Activated CD8-positive, alpha-beta T cell treated with anti-CD3 and anti-CD28 coated beads, Interleukin-2, amount 10 ng/mL, durations not matched to agents 7 days and 5 days (primary cell): ENCODE measurements at regions of chr1 and their contacts with region 1.

Region 1: GRCh38 chr1:154335025-154335714 is 9.8 kb downstream of the ATP8B2 start:
- DNase-seq: peak; percentile 95
- ATAC-seq: peak; percentile 90
- H3K4me3 Mint-ChIP-seq: peak overlapping the region; percentile 47
- H3K27ac Mint-ChIP-seq: peak overlapping the region; percentile 89
- H3K4me1 Mint-ChIP-seq: peaks cover 79% of the 10 kb centered on the region
- H3K27me3 Mint-ChIP-seq: no peaks in the 10 kb centered on the region

Region 2: DNA sequence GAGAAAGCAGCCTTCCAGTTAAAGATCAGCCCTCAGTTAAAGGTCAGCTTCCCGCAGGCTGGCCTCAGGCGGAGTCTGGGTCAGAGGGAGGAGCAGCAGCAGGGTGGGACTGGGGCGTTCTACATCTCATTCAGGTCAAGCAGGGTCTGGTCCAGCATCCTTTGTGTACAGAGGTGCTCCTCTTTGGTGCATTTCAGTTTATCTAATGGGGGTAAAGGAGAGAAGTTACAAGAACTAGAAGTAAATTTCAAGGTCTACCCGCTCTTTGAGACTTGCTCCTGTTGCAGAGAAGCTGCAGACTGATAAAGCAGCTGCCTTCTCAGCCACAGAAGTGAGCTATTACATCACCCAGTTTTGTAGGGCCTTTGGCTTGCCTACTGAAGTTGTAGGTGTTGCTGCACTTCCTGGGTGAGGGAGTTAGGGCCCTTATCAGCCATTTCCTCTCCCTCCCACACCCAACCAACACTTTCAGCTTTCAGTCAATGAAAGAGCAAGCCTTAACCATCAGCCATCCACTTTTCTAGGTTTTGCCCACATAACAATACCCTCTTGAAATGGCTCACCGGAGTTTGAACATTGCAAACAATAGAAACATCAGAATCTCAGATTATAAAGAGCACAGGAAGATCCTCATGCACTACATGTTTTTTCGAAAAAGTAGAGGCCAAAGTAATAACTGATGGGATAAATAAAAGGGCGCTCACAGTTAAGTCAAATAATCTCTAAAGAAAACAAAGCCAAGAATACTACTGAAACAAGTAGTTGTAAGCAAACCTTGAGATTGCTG is 177.5 kb before region 1 on chr1:
- CTCF ChIA-PET with region 1: interaction called, 10 read pairs
- POLR2A ChIA-PET with region 1: no interaction called
- DNase-seq: peak; percentile 89
- ATAC-seq: peak; percentile 98
- H3K4me3 Mint-ChIP-seq: peak overlapping the region; percentile 66
- H3K27ac Mint-ChIP-seq: peak overlapping the region; percentile 94
- H3K4me1 Mint-ChIP-seq: peaks cover 73% of the 10 kb centered on the region
- H3K27me3 Mint-ChIP-seq: no peaks in the 10 kb centered on the region

Region 3: DNA sequence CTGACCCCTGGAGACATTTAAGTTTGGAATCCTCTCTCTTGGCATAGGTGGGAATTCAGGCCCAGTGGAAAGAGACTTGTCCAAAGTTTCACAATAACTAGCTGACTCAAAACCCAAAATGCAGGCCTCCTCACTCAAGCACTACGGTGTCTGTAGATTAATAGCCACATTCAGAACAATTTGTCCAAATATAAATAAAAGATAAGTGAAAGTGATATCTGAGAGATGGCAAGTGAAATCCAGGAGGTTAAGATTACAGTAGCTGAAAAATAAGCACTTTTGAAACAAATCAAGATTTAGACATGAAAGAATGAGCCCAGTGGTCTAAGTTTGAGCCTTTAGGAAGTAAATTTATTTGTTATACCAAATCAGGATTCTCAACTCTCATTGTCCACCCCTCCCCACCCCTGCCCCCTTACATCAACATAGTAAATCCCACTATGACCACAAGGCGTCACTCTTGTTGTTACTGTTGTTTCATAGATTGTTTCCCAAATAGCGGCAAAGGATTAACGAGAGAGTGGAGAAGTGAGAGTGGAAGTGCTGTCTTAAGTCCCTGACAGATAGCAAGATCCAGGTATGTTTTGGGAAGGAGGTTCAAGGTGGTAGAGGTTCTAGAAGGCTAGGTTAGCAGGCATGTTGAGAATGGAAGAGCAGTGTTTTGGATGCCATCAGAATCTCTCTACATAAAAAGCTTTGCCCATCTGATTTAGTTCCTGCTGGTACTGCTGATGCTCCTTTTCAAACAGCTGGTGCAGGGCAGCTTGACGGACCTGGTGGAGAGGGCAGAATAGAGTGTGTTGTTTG is 136.2 kb before region 1 on chr1:
- CTCF ChIA-PET with region 1: interaction called, 37 read pairs
- POLR2A ChIA-PET with region 1: no interaction called
- DNase-seq: peak; percentile 70
- ATAC-seq: peak; percentile 76
- H3K4me3 Mint-ChIP-seq: no peak overlapping the region
- H3K27ac Mint-ChIP-seq: no peak overlapping the region
- H3K4me1 Mint-ChIP-seq: peaks cover 5% of the 10 kb centered on the region
- H3K27me3 Mint-ChIP-seq: peaks cover 12% of the 10 kb centered on the region

Region 4: GRCh38 chr1:154265586-154265985 is 69.6 kb before region 1 on chr1:
- CTCF ChIA-PET with region 1: interaction called, 13 read pairs
- POLR2A ChIA-PET with region 1: no interaction called
- DNase-seq: no peak
- ATAC-seq: peak; percentile 84
- H3K4me3 Mint-ChIP-seq: peak overlapping the region; percentile 6
- H3K27ac Mint-ChIP-seq: peak overlapping the region; percentile 82
- H3K4me1 Mint-ChIP-seq: peaks cover 41% of the 10 kb centered on the region
- H3K27me3 Mint-ChIP-seq: no peaks in the 10 kb centered on the region

Region 5: GRCh38 chr1:154290921-154291320 is 44.2 kb before region 1 on chr1:
- CTCF ChIA-PET with region 1: interaction called, 10 read pairs
- POLR2A ChIA-PET with region 1: no interaction called
- DNase-seq: no peak
- ATAC-seq: no peak
- H3K4me3 Mint-ChIP-seq: no peak overlapping the region
- H3K27ac Mint-ChIP-seq: no peak overlapping the region
- H3K4me1 Mint-ChIP-seq: no peaks in the 10 kb centered on the region
- H3K27me3 Mint-ChIP-seq: peaks cover 7% of the 10 kb centered on the region

Region 6: DNA sequence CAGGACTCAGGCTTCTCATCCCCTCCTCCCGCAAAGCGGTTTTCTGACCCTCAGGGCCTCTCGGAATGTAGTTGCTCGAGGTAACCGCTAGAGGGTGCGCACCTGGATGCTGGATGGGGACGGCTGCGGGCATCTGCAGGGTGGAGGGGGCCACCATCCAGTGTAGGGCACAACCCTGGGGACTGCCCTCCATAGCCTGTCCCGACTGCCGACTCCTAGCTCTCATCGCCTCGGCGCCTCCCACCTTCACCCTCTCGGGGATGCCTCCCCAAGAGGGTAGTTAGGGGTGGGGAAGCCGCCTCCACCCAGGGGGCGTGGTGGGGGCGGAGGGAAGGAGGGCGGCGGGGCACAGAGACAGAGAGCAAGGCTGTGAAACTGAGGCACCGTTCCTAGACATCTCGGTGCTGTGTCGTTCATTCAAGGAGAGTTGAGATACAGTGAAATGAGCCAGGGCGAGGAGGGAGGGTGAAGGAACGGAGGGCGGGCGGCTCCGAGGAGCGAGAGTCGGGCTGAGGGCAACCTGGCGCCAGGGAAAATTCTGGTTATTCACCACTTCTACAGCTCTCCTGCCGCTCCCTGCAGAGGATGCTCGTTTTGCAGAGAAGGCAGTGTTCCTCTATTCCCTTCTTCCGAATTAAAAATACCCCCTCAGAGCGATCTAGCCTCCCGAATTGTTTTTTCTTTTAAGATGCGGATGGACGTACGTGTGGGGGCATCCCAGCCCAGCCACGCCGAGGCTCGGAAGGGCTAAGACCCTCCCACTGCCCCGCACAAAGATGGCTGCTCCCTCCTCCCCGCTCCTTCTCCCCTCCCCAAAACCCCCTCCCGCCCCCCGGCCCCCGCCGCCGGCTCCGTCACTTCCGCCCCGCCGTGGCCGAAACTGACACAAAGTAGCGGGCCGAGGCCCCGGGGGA is 10.2 kb before region 1 on chr1 and contains the start of gene ATP8B2:
- CTCF ChIA-PET with region 1: interaction called, 195 read pairs
- POLR2A ChIA-PET with region 1: interaction called, 13 read pairs
- DNase-seq: peak; percentile 87
- ATAC-seq: peak; percentile 59
- H3K4me3 Mint-ChIP-seq: peak within 1 kb of the TSS; percentile 92
- H3K27ac Mint-ChIP-seq: peak within 1 kb of the TSS; percentile 89
- H3K4me1 Mint-ChIP-seq: peaks cover 45% of the 10 kb centered on the region
- H3K27me3 Mint-ChIP-seq: peaks cover 21% of the 10 kb centered on the region
- total RNA-seq, gene ATP8B2: 65.3 to 71.6 TPM

Region 7: GRCh38 chr1:154386643-154387352 is 51.6 kb after region 1 on chr1:
- CTCF ChIA-PET with region 1: interaction called, 18 read pairs
- POLR2A ChIA-PET with region 1: no interaction called
- DNase-seq: peak; percentile 55
- ATAC-seq: peak; percentile 91
- H3K4me3 Mint-ChIP-seq: peak overlapping the region; percentile 51
- H3K27ac Mint-ChIP-seq: peak overlapping the region; percentile 88
- H3K4me1 Mint-ChIP-seq: peaks cover 26% of the 10 kb centered on the region
- H3K27me3 Mint-ChIP-seq: peaks cover 3% of the 10 kb centered on the region

Region 8: GRCh38 chr1:154456631-154457030 is 121.5 kb after region 1 on chr1:
- CTCF ChIA-PET with region 1: no interaction called
- POLR2A ChIA-PET with region 1: no interaction called
- DNase-seq: no peak
- ATAC-seq: no peak
- H3K4me3 Mint-ChIP-seq: no peak overlapping the region
- H3K27ac Mint-ChIP-seq: no peak overlapping the region
- H3K4me1 Mint-ChIP-seq: peaks cover 16% of the 10 kb centered on the region
- H3K27me3 Mint-ChIP-seq: peaks cover 24% of the 10 kb centered on the region